ENCODE measurements at regions of chr9 and their contacts with region 1.

Region 1: DNA sequence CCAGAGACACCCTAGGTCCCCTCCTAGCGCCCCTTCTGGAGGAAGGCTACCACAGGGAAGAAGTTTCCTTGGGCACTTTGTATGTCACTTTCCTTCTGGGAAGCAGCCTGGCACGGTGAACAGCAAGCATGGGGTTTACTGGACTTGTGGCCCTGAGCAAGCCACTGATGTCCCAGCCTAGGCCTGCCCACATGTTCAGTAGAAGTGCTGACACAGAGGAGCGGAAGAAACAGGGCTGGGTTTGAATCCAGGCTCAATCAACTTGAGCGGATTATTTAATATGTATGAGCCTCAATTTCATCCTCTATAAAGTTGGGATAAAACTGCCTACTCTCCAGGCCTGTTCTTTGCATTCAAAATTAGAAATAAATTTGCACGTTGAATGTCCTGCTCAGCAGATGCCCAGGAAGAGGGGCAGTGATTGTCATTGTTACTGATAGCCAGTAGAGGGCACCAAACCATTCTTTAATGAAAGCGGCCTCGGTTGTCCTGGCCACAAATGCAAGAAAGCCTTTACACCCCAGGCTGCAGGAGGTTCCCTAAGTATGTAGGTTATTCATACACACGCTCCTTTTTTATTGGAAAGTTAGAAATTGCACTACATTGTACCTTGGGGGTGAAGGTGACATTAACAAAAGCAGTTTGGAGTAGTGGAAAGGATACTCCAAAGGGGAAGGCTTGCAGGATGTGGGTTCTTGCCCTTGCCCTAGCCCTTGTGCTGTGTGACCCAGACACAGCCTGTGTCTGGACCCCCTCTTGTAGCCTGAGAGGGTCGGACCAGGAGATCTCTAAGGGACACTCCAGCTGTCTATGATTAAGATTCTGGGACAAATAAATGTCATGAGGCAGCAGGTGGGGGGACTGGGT is 13.4 kb upstream of the XPA start:
- DNase-seq: peak; percentile 43 to 72 (median 60)
- H3K4me3 ChIP-seq: no peak overlapping the region
- H3K27ac ChIP-seq: no peak overlapping the region
- H3K4me1 ChIP-seq: no peaks in the 10 kb centered on the region
- H3K27me3 ChIP-seq: no peaks in the 10 kb centered on the region
- CTCF ChIP-seq: peak; percentile 69 to 86 (median 79)
- POLR2A ChIP-seq: no peak

Region 2: GRCh38 chr9:97890038-97890437 is 179.4 kb after region 1 on chr9:
- intact Hi-C with region 1: loop called (anchors 5 kb)
- DNase-seq: peak in 4 of 7 donors; percentile 36 to 62 (median 47)
- H3K4me3 ChIP-seq: no peak overlapping the region
- H3K27ac ChIP-seq: no peak overlapping the region
- H3K4me1 ChIP-seq: no peaks in the 10 kb centered on the region
- H3K27me3 ChIP-seq: no peaks in the 10 kb centered on the region
- CTCF ChIP-seq: peak; percentile 33 to 69 (median 52)
- POLR2A ChIP-seq: no peak

Region 3: GRCh38 chr9:97895695-97896332 is 185.2 kb after region 1 on chr9:
- intact Hi-C with region 1: loop called (anchors 5 kb)
- DNase-seq: no peak
- H3K4me3 ChIP-seq: no peak overlapping the region
- H3K27ac ChIP-seq: no peak overlapping the region
- H3K4me1 ChIP-seq: peaks cover 0 to 11% of the 10 kb centered on the region in 2 donors
- H3K27me3 ChIP-seq: no peaks in the 10 kb centered on the region
- CTCF ChIP-seq: no peak
- POLR2A ChIP-seq: no peak

Region 4: DNA sequence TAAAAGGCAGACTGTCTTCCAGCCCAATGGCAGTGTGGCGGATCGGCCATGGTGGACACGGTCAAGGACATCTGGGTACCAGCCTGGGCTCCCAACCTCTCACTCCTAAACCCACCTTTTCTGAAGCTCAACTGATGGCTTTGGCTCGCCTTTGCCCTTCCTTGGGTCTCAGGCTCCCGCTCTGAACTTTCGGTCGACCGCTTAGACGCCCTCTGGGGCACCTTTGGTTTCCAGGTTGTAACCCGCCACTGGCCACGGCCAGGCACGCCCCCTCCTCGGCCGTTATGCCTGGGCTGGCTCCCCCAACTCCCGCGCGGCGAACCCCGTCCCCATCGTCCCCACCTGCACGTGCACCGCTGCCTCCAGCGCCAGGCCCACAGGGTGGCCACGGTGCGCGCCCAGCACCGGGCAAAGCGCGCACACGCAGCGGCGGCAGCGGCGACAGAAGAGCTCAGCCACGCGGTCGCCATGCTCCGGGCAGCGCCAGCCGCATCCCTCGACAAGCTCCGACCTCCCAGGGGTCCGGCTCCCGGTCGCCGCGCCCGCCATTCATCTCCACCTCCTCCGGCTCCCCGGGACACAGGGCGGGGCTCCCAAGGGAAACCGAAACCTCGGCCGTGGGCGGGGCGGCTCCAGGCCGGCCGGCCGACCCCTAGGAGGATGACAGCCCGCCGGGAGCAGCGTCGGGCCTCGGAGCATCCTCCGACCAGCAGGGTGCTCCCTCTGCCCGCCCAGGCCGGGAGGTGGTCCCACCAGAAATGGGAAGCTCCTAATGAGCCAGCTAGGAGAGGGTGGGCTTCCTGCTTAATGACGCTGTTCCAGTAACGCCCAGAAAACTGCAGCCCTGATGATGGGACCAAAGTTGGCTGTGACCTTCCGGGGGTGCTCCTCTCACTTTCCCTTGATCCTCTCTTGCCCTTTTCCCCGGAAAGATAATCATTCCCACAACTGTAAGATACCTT is 408.3 kb after region 1 on chr9 and contains the start of gene TRIM14:
- intact Hi-C with region 1: no loop called
- DNase-seq: peak; percentile 41 to 73 (median 52)
- H3K4me3 ChIP-seq: peak within 1 kb of the TSS in 3 of 4 donors; percentile 38 to 80 (median 63)
- H3K27ac ChIP-seq: peak within 1 kb of the TSS in 4 of 5 donors; percentile 39 to 79 (median 58)
- H3K4me1 ChIP-seq: peaks cover 0 to 6% of the 10 kb centered on the region in 2 donors
- H3K27me3 ChIP-seq: no peaks in the 10 kb centered on the region
- CTCF ChIP-seq: peak in 2 of 6 experiments; percentile 6 to 14
- POLR2A ChIP-seq: no peak
- total RNA-seq, gene TRIM14: 0.72 to 24.8 (median 14.5) TPM